Calu3 (cell line): ENCODE measurements at regions of chr12 and their contacts with region 1.

Region 1: DNA sequence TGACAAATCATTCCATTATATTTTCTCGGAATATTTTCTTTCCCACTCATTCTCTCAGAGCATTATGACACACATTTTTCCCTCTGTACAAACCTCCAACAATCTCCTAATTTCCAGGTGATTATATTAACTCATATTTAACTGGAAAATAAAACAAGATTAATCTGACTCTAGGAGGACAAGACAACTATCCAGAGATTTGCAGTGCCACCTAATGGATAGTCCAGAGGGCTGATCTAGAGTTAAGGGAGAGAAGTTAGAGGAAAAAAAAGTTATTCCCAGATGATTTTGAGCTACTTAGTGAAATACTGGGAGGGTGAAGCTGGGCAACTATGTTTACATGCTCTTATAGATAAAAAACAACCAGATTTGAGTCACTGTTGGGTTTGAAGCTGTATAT is 161.7 kb downstream of the ALX1 start:
- DNase-seq: no peak
- H3K4me3 Mint-ChIP-seq: no peak overlapping the region
- H3K27ac Mint-ChIP-seq: no peak overlapping the region
- H3K4me1 Mint-ChIP-seq: peaks cover 22% of the 10 kb centered on the region
- H3K27me3 Mint-ChIP-seq: no peaks in the 10 kb centered on the region
- CTCF ChIP-seq: no peak

Region 2: GRCh38 chr12:85309125-85309566 is 132.6 kb before region 1 on chr12:
- CTCF ChIA-PET with region 1: no interaction called
- intact Hi-C with region 1: loop called (anchors 5 kb)
- DNase-seq: no peak
- H3K4me3 Mint-ChIP-seq: no peak overlapping the region
- H3K27ac Mint-ChIP-seq: no peak overlapping the region
- H3K4me1 Mint-ChIP-seq: no peaks in the 10 kb centered on the region
- H3K27me3 Mint-ChIP-seq: no peaks in the 10 kb centered on the region
- CTCF ChIP-seq: no peak